Heart left ventricle (tissue), 16 donors: ENCODE measurements at regions of chrX and their contacts with region 1.

Region 1: DNA sequence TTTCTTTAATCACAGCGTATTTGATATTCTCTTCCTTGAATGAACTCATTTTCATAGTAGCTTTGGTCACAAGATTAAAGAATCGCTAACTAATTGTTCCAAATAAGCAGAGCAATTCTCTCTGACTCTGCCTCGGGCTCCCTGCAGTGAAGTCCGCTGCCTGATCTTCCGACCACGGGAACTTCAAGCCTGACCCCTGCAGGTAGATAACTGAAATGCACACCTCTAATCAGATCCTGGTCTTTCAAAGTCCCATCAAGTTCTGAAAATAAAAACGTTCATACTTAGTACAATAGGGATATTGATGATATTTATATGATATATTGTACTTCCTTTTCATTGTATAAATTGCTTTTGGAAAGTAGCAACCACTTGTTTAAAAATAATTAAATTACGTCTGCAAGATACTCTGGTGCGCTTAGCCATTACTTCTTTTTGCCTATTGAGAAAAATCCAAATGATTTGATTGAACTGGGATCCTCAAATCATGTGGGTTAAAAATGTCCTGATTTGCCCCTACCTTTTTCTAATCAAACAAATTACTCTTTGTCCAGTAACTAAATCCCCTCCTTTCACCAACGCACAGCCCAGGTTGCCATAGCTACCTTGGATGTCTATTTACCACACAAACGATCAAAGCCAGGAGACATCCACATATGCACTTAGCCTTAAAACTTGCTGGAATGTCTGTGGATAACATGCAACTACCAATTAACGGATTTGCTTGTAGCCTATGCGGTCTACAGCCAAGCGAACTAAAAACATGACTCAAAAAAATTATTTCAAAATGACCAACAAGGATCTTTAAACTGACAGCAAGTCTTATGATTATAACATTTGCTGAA is 4.2 kb downstream of the MID1 start:
- DNase-seq: peak in 3 of 5 donors; percentile 30 to 35 (median 31)
- ATAC-seq: peak in 3 of 4 donors; percentile 47 to 60 (median 52)
- H3K4me3 ChIP-seq: peak overlapping the region in 6 of 12 donors; percentile 7 to 86 (median 52)
- H3K27ac ChIP-seq: peak overlapping the region in 3 of 12 donors; percentile 10 to 77 (median 19)
- H3K4me1 ChIP-seq: peaks cover 0 to 5% (median 0%) of the 10 kb centered on the region in 12 donors
- H3K27me3 ChIP-seq: peaks cover 0 to 27% (median 0%) of the 10 kb centered on the region in 9 donors
- CTCF ChIP-seq: peak; percentile 41 to 69 (median 63)
- POLR2A ChIP-seq: no peak

Region 2: DNA sequence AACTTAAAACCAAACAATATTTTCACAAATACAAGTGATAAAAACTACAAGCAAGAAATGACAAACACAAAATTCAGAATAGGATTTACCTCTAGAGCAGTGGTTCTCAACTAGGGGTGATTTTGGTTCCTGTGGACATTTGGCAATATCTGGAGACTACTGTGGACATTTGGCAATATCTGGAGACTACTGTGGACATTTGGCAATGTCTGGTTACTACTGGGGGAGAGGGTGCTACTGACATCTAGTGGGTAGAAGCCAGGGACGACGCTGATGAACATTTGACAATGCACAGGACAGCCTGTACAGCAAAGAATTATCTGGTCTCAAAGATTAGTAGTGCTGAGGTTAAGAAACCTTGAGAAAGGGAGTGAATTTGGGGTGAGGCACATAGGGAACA is 289.6 kb before region 1 on chrX:
- intact Hi-C with region 1: loop called in 1 of 10 experiments (anchors 10 kb)
- DNase-seq: no peak
- ATAC-seq: peak in 3 of 4 donors; percentile 60 to 71 (median 61)
- H3K4me3 ChIP-seq: no peak overlapping the region
- H3K27ac ChIP-seq: no peak overlapping the region
- H3K4me1 ChIP-seq: no peaks in the 10 kb centered on the region
- H3K27me3 ChIP-seq: no peaks in the 10 kb centered on the region
- CTCF ChIP-seq: peak in 9 of 12 donors; percentile 9 to 38 (median 25)
- POLR2A ChIP-seq: no peak